Right ventricle myocardium inferior (tissue), 1 donor: ENCODE measurements at regions of chr4 and their contacts with region 1.

Region 1: DNA sequence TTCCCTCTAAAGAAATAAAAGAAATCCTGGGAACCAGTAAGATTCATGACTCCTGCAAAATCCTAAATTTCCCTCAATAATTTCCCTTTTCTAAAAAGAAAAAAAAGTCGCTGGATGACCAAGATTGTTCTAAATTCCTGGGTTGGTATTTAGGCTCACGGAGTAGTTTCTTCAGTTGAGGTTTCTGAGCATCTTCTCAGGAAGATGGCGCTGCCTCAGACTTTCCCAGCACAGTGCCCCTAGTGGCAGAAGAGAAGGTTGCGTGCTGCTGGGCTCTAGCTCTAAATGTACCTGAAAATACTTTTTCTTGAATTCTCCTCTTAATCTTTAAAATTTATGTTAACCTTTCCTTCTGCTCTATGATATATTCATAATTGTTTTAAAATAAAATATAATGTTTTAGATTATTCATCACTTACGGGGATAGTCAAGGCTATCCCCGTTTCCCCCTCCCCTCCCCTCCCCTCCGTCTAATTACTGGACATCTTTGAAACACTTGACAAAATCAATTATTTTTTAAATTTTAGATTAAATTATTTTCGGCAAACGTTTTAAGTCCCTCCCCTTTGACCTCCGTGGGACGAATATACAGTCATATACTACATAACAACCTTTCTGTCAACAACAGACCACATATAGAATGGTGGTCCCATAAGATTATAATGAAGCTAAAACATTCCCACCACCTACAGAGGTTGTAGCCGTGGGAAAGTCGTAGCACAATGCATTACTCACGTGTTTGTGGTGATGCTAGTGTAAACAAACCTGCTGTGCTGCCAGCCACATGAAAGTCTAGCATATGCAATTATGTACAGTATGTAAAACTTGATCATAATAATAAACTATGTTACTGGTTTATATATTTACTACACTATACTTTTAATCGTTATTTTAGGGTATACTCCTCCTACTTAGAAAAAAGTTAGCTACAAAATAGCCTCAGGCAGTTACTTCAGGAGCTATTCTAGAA is 41.0 kb upstream of the GATB start:
- DNase-seq: no peak
- ATAC-seq: no peak

Region 2: DNA sequence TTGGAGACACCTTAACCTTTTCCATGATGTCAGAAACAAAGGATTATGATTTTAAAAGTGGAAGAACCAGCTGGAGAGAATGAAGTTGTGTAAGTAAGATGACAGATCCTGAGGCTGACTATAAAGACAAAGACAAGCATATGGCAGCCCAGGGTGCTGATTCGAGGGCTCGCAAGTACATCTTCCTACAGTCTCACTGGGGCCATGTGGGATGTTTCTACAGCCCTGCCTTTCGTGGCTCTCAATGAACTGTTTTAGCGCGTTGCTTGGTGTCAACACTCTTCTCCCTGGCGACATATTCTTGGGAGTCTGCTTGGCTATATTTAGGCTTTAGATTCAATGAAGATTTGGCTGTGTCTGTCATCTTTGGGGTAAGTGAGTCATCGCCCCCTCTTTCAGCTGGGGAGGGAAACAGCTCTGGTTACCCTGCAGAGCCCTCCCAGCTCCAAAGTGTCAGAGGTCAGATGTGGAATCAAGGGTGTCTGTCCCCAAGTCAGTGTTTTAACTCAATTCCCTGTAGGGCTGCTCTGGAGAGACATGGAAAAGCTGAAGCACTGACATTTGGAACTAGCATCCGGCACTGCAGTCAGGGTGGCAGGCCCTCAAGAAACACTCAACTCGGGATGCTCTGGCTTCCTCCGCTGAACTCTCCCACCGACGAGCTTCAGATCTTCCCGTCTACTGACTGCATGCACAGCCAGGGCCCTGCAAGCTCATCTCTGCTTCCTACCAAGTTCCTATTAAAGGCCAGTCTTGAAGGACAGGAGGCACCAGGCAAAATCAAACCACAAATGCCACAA is 106.7 kb before region 1 on chr4:
- intact Hi-C with region 1: loop called (anchors 2 kb)
- DNase-seq: no peak
- ATAC-seq: peak; percentile 78

Region 3: GRCh38 chr4:151781026-151781425 is 20.8 kb before region 1 on chr4:
- intact Hi-C with region 1: loop called (anchors 1 kb)
- DNase-seq: no peak
- ATAC-seq: peak; percentile 94

Region 4: DNA sequence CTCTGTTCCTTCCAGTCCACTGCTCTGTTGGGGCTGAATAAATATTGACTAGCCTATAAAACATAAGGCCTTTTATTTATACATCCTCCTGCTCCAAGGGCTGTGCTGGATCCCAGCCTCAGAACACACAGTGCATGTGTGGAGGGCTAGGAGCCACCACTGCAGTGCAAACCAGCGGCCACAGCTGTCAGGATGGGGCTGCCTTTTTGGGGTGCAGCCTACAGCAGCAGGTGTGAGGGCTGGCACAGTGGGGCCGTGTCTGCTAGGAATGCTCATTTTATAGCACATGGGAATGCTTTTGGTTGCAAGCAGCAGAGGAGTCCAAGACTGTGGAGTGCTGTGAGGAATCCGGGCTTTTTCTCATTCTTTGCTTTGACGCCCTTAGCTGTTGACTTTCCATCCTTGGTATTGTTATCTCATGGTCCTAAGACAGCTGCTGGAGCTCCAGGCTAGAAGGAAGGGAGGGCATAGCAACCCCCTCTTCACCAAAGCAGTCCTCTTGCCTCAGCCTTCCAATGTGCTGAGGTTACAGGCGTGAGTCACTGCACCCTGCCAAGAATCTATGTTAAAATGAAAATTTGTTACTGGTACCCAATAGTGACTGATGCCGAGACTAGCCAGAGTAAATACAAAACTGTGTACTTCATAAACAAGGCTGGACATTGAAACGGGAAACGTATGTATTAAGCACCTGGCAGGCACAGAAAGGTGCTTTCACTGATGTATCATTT is 293.3 kb after region 1 on chr4:
- intact Hi-C with region 1: loop called (anchors 5 kb)
- DNase-seq: no peak
- ATAC-seq: no peak